ENCODE measurements at regions of chr15 and their contacts with region 1.

Region 1: DNA sequence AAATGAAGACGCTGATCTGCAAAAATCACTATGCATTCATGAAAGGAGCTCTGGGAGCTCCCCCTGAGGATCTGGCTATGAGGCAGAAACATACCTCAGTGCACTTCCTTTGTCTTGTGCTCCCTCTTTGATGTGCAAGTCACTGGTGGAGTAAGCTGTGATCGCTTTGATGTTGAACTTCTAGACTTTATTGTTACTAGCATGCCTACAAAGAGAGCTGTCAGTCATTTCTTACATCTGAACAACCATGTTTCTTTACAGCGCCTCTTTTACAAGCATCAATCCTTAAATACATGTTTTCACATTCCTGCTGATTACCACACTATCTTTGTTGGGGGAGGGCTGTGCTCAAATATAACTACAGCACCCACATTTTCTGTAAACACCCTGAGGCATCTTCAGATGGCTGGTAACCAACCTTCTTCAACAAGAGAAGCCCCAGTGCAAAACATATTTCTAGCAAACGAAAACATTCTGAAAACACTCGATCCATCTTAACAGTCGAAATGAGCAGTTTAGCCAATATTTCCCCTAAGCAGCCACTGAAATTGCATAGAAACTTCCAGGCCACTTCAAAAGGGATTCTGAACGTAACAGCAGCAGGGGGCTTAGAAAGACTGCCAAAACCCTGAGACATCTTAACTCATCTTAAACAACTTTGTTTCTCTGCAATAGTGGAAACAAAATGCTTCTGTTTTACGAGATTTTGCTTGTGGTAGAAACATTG is 101.9 kb upstream of the ICE2 start:
- DNase-seq: peak in 7 of 9 donors; percentile 72 to 90 (median 86)
- ATAC-seq: peak; percentile 91
- H3K4me3 ChIP-seq: peak overlapping the region; percentile 33
- H3K4me3 Mint-ChIP-seq: peak overlapping the region; percentile 72 to 88 (median 85)
- H3K27ac ChIP-seq: peak overlapping the region; percentile 82
- H3K27ac Mint-ChIP-seq: peak overlapping the region; percentile 90 to 98 (median 96)
- H3K4me1 ChIP-seq: peaks cover 78 to 80% of the 10 kb centered on the region in 2 donors
- H3K4me1 Mint-ChIP-seq: peaks cover 58 to 99% (median 91%) of the 10 kb centered on the region in 7 donors
- H3K27me3 ChIP-seq: no peaks in the 10 kb centered on the region
- H3K27me3 Mint-ChIP-seq: no peaks in the 10 kb centered on the region

Region 2: DNA sequence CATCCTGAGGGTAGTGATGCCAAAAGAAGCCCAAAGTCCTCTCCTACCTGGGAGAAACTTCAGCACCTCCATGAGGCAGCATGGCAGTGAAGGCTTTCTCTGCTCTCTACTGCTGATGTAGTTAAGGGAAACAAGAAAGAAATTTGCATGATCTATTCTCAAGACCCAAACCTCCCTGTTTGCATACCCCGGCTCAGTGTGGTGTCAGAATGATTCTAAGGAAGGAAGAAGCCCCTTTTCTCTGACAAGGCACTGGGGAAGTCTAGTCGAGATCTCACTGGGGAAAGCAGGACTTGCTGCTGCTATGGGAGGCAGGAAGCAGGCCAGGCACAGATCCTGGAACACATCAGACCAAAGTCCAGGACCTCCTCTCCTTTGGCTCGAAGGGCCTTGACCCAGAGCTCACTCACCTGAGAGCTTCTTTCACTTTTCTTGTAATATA is 12.5 kb before region 1 on chr15:
- CTCF ChIA-PET with region 1: interaction called, 23 read pairs
- POLR2A ChIA-PET with region 1: interaction called, 15 read pairs
- intact Hi-C with region 1: loop called (anchors 1 kb)
- DNase-seq: no peak
- ATAC-seq: no peak
- H3K4me3 ChIP-seq: no peak overlapping the region
- H3K4me3 Mint-ChIP-seq: peak overlapping the region; percentile 7 to 78 (median 62)
- H3K27ac ChIP-seq: no peak overlapping the region
- H3K27ac Mint-ChIP-seq: peak overlapping the region in 8 of 9 donors; percentile 65 to 89 (median 78)
- H3K4me1 ChIP-seq: peaks cover 80% of the 10 kb centered on the region in 2 donors
- H3K4me1 Mint-ChIP-seq: peaks cover 66 to 99% (median 93%) of the 10 kb centered on the region in 7 donors
- H3K27me3 ChIP-seq: no peaks in the 10 kb centered on the region
- H3K27me3 Mint-ChIP-seq: no peaks in the 10 kb centered on the region

Region 3: DNA sequence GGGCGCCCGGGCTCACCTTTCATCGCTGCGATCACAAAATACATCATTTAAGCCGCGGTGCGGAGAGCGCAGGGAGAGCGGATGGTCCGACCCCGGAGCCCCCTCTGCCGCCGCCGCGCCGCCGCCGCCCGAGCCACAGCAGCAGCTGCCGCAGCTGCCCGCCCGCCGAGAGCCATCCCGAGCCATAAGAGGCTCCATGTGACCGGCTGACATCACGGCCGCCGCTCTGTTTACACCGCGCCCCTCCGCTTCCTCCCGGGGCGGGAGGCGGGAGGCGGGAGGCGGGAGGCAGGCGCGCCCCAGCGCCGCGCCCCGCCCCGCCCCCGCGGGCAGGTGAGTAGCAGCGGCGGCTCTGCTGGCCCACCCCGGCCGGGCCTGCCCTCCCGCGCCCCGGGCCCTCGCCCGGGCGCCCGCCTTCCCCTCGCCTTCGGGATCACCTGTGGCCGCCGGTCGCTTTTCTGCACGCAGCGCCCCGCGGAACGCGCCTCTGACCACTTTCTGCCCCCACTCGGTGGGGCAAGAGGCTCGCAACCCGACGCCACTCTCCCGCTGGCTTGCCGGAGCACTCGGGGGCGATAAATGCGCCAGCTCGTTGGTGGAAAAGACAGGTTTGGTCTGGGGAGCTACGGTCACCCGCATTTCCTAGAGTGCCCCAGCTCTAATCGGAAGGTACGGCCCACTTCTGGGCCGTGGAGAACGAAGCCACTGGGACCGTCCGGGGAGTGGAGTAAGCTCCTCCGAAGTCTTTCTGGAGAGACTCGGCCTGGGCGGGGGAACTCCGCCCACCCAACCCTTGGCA is 11.8 kb after region 1 on chr15:
- CTCF ChIA-PET with region 1: interaction called, 3 read pairs
- POLR2A ChIA-PET with region 1: interaction called, 40 read pairs
- intact Hi-C with region 1: loop called (anchors 1 kb)
- DNase-seq: peak; percentile 72 to 89 (median 86)
- ATAC-seq: peak; percentile 95
- H3K4me3 ChIP-seq: peak overlapping the region; percentile 75
- H3K4me3 Mint-ChIP-seq: peak overlapping the region; percentile 84 to 89 (median 86)
- H3K27ac ChIP-seq: peak overlapping the region; percentile 96
- H3K27ac Mint-ChIP-seq: peak overlapping the region; percentile 83 to 93 (median 85)
- H3K4me1 ChIP-seq: peaks cover 6 to 29% of the 10 kb centered on the region in 2 donors
- H3K4me1 Mint-ChIP-seq: peaks cover 19 to 53% (median 48%) of the 10 kb centered on the region in 7 donors
- H3K27me3 ChIP-seq: no peaks in the 10 kb centered on the region
- H3K27me3 Mint-ChIP-seq: peaks cover 0 to 4% (median 0%) of the 10 kb centered on the region in 5 donors

Region 4: DNA sequence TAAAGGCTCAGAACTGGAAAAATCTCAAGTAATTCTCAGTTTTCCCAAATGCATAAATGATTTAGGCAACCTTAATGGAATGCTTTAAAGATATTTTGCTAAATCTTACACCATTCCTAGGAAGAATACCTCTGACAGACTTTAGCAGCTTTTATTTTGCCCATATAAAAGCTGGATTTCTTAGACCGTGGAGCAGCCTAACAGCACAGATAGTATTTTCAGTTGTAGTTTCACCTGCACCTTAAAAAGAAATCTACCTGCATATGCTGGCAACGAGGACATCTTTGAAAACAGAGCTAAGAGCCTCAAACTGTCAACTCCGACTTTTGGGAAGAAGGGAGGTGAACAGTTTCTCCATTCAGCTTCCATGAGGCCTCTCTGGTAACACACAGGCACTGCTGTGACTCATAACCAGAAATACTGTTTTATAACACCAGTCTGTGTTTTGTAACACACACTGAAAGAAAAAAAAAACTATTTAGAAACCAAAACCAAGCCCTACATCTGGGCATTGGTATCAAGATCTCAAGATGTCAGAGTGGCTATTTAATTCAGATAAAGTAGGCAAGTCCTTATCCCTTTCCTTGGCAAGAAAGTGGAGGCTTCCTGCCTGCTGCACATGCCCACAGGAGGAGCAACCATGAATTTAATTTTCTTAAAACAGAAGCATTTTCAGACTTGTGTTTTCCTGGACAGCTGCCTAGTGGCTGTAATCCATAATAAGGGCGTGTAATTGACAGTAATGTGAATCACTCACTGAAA is 79.7 kb after region 1 on chr15:
- CTCF ChIA-PET with region 1: no interaction called
- POLR2A ChIA-PET with region 1: no interaction called
- intact Hi-C with region 1: no loop called
- DNase-seq: no peak
- ATAC-seq: no peak
- H3K4me3 ChIP-seq: no peak overlapping the region
- H3K4me3 Mint-ChIP-seq: no peak overlapping the region
- H3K27ac ChIP-seq: no peak overlapping the region
- H3K27ac Mint-ChIP-seq: peak overlapping the region in 1 of 9 donors; percentile 31
- H3K4me1 ChIP-seq: no peaks in the 10 kb centered on the region
- H3K4me1 Mint-ChIP-seq: peaks cover 0 to 14% (median 3%) of the 10 kb centered on the region in 7 donors
- H3K27me3 ChIP-seq: no peaks in the 10 kb centered on the region
- H3K27me3 Mint-ChIP-seq: no peaks in the 10 kb centered on the region